ENCODE measurements at regions of chr12 and their contacts with region 1.

Region 1: DNA sequence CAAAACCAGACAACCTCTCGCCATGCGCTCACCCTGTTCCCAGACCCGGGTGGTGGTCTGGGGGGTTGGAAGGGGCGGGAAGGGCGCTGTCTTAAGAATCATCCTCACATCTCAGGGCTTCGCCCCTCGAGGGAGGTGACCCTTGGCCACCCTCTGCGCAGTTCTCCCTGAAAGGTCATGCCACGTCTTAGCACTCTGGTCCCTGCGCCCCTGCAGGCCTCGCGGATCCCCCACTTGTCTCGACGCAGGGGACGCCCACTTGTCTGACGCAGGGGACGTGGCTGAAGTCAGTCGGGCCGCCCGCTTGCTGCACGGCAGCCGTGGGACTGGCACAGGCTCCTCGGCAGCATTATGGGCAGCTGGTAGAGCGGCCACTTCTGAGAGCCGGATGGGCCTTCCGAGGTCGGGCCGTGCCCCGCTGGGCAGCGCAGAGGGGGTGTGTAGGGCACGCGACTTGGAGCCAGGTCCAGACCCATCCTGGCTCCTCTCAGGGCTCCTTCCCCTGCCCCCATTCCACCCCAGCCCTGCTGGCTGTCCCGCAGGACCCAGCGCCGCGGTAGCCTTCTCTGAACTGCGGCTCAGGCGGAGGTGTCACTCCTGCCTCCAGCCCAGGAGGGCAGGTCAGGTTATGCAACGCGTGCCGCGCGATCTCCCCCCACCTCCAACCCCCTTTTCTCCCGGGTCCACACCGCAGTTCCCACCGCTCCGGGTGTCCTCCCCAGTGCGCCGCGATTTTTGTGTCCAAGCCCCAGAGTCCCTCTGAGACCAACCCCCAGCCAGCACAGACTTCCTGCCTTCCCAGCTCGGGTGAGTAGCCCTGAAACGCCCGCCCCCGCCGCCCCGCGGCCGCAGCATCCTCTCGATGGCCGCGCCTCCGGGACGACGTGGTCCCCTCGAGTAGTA is 40.9 kb upstream of the CAPRIN2 start:
- DNase-seq: peak; percentile 72
- H3K4me3 ChIP-seq: peak overlapping the region; percentile 66 to 76 (median 72)
- H3K27ac ChIP-seq: peak overlapping the region; percentile 77
- H3K4me1 ChIP-seq: peaks cover 47% of the 10 kb centered on the region
- H3K27me3 ChIP-seq: no peaks in the 10 kb centered on the region
- CTCF ChIP-seq: peak in 1 of 2 donors; percentile 11

Region 2: DNA sequence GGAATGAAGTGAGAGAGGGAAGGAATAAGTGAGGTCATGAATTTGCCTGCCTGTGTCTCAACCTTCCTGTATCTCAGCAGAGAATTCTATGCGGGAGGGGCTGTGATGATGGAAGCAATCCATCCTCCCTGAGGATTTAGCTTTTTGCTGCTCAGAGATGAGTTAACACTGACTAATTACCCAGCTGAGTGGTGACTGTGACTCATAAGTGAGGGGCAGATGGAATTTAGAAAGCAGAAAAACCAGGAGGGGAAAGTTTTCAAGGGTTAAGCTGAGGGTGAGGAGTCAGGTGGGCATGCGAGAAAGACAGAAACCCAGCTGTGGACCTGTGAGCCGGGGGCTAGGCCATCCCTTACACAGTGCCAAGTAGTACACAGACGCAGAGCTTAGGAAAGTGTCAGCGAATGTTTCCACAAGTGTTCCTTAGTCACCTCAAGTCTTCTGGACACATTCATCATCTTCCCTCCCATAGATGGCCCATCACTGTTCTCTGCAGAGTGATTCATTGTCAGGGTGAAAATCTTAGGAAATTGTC is 377.9 kb before region 1 on chr12:
- CTCF ChIA-PET with region 1: no interaction called
- dilution Hi-C with region 1: no loop called
- in situ Hi-C with region 1: no loop called
- intact Hi-C with region 1: loop called (anchors 2 kb)
- DNase-seq: peak; percentile 98
- H3K4me3 ChIP-seq: peak overlapping the region in 1 of 3 experiments; percentile 27
- H3K27ac ChIP-seq: peak overlapping the region; percentile 92
- H3K4me1 ChIP-seq: peaks cover 57% of the 10 kb centered on the region
- H3K27me3 ChIP-seq: no peaks in the 10 kb centered on the region
- CTCF ChIP-seq: no peak

Region 3: DNA sequence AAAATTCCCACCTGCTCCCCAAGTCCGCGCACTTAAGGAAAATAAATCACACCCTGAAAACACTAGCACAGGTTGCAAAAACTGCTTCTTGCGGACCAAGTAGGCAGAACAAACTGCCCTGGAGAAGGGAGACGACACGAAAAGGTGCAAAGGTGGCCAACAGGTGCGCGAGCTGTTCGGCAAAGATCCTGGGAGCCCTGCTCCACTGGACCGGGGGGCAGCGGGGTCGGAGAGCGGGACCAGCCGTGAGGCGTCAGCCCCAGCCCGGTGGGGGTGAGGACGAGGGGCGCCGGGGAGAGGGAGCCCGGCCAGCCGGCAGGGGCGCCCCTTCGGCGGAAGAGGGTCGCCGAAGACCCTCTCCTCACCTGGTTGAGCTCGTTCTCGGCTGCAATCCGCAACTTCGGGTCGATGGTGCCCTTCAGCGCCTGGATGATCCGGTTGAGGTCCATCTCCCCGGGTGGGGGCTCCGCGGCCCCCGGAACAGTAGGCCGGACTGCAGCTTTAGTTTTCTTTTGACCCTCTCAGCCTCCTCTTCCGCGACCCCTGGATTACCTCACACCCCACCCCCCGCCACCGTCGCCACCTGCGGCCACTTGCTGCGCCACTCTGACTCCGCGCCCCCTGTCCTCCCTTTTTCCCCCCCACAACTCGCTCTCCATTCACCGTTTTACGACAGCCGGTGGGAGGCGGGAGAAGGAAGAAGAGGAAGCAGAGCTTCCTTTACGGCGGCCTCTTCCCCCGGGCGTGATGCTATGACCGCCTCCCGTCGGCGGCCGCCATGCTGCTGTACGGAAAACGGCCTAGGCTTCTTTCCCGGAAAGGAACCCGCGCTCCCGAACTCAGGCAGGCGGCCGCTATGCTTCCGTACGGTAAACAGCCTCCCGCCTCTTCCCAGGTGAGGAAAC is 100.2 kb before region 1 on chr12 and contains the start of gene IPO8:
- CTCF ChIA-PET with region 1: no interaction called
- dilution Hi-C with region 1: no loop called
- in situ Hi-C with region 1: no loop called
- intact Hi-C with region 1: loop called (anchors 1 kb)
- DNase-seq: peak; percentile 90
- H3K4me3 ChIP-seq: peak within 1 kb of the TSS; percentile 68 to 99 (median 76)
- H3K27ac ChIP-seq: peak within 1 kb of the TSS; percentile 55
- H3K4me1 ChIP-seq: peaks cover 24% of the 10 kb centered on the region
- H3K27me3 ChIP-seq: no peaks in the 10 kb centered on the region
- CTCF ChIP-seq: peak in 1 of 2 donors; percentile 47
- total RNA-seq, gene IPO8: 21.5 to 40.7 TPM

Region 4: DNA sequence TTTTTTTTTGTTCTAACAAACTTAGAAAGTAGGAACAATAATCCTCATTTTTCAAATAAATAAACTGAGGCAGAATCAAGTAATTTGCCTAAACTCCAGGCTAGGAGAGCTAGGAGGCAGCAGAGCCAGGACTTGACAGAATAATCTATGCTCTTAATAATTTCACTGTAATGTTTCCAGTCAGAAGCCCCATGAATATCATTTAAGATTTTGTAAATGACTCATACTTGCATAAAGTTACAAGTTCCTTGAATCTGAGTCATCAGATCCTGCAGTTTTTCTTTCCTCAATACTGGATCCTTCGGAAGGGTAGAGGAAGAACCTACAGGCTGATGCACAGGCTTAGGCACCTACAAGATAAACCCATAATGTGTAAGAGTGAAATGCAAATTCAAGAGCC is 69.9 kb before region 1 on chr12:
- CTCF ChIA-PET with region 1: no interaction called
- dilution Hi-C with region 1: no loop called
- in situ Hi-C with region 1: no loop called
- intact Hi-C with region 1: loop called (anchors 2 kb)
- DNase-seq: peak; percentile 57
- H3K4me3 ChIP-seq: no peak overlapping the region
- H3K27ac ChIP-seq: no peak overlapping the region
- H3K4me1 ChIP-seq: no peaks in the 10 kb centered on the region
- H3K27me3 ChIP-seq: no peaks in the 10 kb centered on the region
- CTCF ChIP-seq: no peak

Region 5: GRCh38 chr12:30754709-30755394 is 40.8 kb before region 1 on chr12 and contains the start of gene CAPRIN2:
- CTCF ChIA-PET with region 1: no interaction called
- dilution Hi-C with region 1: no loop called
- in situ Hi-C with region 1: no loop called
- intact Hi-C with region 1: loop called (anchors 1 kb)
- DNase-seq: peak; percentile 96
- H3K4me3 ChIP-seq: peak within 1 kb of the TSS; percentile 84 to 94 (median 86)
- H3K27ac ChIP-seq: peak within 1 kb of the TSS; percentile 39
- H3K4me1 ChIP-seq: peaks cover 17% of the 10 kb centered on the region
- H3K27me3 ChIP-seq: no peaks in the 10 kb centered on the region
- CTCF ChIP-seq: peak; percentile 2 to 53
- total RNA-seq, gene CAPRIN2: 17.2 to 38.0 TPM

Measured in mammary epithelial cell (primary cell).